Cardiac septum (tissue), 1 donor: ENCODE measurements at regions of chr18 and their contacts with region 1.

Region 1: GRCh38 chr18:3703732-3704176 is 253.8 kb downstream of the TGIF1 start:
- DNase-seq: no peak

Region 2: GRCh38 chr18:3511922-3512372 is 191.8 kb before region 1 on chr18:
- intact Hi-C with region 1: no loop called
- DNase-seq: no peak

Region 3: GRCh38 chr18:3995476-3996102 is 291.8 kb after region 1 on chr18:
- intact Hi-C with region 1: loop called (anchors 5 kb)
- DNase-seq: no peak

Region 4: GRCh38 chr18:4068552-4069158 is 364.9 kb after region 1 on chr18:
- intact Hi-C with region 1: loop called (anchors 5 kb)
- DNase-seq: no peak